Activated CD4-positive, alpha-beta T cell treated with anti-CD3 and anti-CD28 coated beads, Interleukin-2, amount 10 ng/mL, durations not matched to agents 24 days and 14 days (primary cell): ENCODE measurements at regions of chr7 and their contacts with region 1.

Region 1: DNA sequence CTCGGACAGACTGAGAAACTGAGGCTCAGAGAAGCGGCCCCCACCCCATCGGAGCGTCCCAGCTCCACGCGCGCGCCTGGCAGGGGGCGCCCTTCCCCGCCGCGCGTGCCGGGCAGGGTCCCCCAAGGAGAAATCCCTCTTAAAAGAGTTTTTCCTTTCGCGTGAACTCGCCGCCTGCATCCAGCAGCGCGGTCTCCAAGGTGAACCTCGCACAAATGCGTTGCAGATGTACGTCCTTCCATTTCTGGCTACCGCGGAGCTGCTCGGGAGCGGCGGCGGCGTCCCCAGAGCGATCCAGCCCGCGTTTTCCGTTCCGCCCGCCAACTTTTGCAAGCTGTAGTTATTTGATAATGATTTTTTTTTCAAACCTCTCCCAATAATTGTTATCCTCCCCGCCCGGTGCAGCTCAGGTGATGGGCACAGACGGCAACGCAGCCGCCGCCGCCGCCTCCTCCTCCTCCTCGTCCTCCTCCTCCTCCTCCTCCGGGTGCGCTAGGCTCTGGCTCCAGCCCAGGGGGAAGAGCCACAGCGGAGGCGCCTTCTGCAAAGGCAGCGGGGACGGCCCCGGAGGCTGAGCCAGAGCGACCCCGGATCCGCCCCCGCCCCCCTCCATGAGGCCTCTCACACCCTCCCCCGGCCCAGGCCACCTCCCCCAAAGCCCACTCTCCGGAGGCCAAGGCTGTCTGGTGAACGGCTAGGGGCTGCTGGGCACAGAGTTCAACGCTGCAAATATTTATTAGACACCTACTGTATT is 74.0 kb upstream of the CUX1 start:
- DNase-seq: peak; percentile 92
- H3K4me3 Mint-ChIP-seq: peak overlapping the region; percentile 83
- H3K27ac Mint-ChIP-seq: no peak overlapping the region
- H3K4me1 Mint-ChIP-seq: peaks cover 40% of the 10 kb centered on the region
- H3K27me3 Mint-ChIP-seq: no peaks in the 10 kb centered on the region

Region 2: DNA sequence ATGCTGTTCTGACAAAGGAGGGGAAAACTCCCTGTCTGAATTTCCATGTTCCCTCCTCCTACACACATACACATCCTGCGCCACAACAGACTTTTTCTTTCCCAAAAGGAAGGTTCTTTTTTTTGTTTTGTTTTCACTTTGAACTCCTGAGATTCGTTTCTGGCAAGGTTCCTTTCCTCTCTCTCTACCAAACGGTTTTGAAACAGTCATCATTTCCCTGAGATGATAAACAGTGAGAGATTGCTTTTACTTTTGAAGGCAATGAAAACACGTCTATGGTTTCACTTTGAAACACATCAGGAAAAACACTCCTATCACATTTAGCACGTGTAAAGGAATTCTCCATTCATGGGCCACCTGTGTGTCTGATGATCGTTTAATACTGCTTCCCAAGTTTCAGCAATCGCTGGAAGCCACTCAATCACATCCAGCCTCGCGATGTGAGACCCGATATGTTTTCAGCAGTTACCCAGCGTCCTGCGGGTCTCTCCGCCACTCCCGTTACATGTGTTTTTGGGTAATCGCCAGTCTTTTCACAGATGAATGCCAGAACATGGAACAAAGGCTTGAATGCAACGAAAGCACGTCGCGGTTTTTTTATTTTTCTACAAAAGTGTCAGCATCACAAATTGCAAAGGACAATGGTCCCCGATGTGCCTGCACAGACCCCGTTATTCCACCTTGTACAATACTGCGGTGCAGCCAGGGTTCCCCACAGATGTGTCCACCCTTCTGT is 11.2 kb after region 1 on chr7:
- intact Hi-C with region 1: loop called (anchors 1 kb)
- DNase-seq: peak; percentile 65
- H3K4me3 Mint-ChIP-seq: peak overlapping the region; percentile 87
- H3K27ac Mint-ChIP-seq: peak overlapping the region; percentile 84
- H3K4me1 Mint-ChIP-seq: peaks cover 18% of the 10 kb centered on the region
- H3K27me3 Mint-ChIP-seq: no peaks in the 10 kb centered on the region

Region 3: GRCh38 chr7:101856473-101857357 is 113.3 kb after region 1 on chr7:
- intact Hi-C with region 1: loop called (anchors 5 kb)
- DNase-seq: peak; percentile 93
- H3K4me3 Mint-ChIP-seq: peak overlapping the region; percentile 90
- H3K27ac Mint-ChIP-seq: peak overlapping the region; percentile 97
- H3K4me1 Mint-ChIP-seq: peaks cover 28% of the 10 kb centered on the region
- H3K27me3 Mint-ChIP-seq: no peaks in the 10 kb centered on the region

Region 4: DNA sequence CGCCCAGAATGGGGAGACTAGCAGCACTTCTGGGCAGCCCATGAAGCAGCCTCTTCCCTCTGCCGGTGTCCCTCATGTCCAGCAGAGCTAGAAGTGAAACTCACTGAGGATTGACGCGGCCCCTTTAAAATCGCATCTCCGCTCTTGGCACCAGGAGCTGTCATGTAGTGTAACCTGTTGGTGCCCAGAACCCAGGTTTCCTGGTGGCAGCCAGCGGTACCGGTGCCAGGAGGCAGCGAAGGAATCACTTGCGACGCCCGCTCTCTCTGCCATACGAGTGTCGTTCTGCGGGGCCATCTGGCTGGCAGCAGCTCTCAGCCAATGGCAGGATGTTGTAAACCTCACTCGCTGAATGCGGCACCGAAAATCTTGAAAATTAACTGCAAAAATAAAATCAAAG is 156.7 kb after region 1 on chr7:
- intact Hi-C with region 1: no loop called
- DNase-seq: no peak
- H3K4me3 Mint-ChIP-seq: no peak overlapping the region
- H3K27ac Mint-ChIP-seq: no peak overlapping the region
- H3K4me1 Mint-ChIP-seq: no peaks in the 10 kb centered on the region
- H3K27me3 Mint-ChIP-seq: no peaks in the 10 kb centered on the region